Posterior cingulate gyrus (tissue), 11 donors: ENCODE measurements at regions of chr1 and their contacts with region 1.

Region 1: DNA sequence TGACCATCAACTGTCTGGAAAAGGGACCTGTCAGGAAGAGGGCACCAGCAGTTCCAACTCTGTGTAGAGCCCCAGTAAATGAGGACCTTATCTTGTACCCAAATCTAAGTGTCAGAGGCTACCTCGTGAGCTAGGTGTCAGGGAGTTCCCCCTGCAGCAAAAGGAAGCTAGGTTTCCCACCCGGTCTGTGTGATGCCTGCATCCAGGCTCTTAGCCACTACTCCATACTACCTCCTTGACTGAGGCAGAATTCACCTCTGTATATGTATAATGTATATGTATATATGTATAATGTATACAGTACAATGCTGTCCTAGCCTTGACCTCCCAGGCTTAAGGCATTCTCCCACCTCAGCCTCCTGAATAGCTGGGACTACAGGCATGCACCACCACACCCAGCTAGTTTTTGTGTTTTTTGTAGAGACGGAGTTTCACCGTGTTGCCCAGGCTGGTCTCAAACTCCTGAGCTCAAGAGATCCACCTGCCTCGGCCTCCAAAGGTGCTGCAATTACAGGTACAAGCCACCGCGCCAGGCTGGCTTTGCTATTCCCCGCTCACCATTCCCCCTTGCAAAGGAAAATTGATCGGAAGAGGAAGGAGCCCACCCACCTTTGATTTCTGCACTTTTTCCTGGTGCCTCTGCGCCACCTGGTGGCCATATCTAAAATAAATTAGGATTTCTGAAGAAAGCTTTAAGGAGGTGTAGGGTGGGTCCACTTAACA is 15.7 kb upstream of the LUZP1 start:
- DNase-seq: peak in 1 of 10 donors; percentile 26

Region 2: GRCh38 chr1:22488319-22488718 is 696.1 kb before region 1 on chr1:
- intact Hi-C with region 1: no loop called
- DNase-seq: no peak

Region 3: DNA sequence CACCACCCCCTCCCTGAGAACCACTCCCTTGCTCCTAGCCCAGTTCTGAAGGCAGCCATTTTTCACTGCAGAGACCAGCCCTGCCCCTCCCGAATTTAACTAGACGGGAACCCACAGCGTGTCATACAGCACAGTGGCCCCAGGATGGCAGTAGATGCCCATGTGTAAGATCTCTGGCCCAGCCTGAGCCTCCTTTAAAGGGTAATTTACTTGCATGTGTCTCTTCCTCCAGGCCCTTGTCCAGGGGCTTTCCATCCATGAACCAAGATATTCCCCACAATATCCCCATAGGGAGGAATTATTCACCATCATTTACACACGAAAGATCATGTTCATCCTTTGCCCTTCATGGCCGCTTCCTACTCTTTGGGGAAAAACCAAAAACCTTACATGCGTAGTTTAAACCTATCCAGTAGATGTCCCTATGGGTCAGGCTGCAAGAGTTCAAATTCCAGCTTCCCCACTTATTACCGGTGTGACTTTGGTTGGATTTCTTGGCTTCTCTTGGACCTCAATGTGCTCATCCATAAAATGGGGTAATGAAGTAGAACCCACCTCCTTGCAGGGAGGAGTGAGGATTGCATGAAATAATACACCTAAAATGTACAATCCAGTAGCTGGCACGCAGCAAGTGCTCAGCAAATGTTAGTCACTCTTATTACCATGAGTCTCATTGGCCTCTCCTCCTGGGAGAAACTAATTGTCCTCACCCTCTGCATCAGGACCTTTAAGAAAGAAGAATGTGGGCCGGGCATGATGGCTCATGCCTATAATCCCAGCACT is 207.7 kb before region 1 on chr1:
- intact Hi-C with region 1: loop called (anchors 1 kb)
- DNase-seq: peak; percentile 31 to 95 (median 69)